ENCODE measurements at regions of chr14 and their contacts with region 1.

Region 1: GRCh38 chr14:52325126-52325525 is 11.0 kb downstream of the PTGER2 start:
- DNase-seq: peak; percentile 84
- H3K4me3 Mint-ChIP-seq: peak overlapping the region; percentile 75
- H3K27ac Mint-ChIP-seq: peak overlapping the region; percentile 77
- H3K4me1 Mint-ChIP-seq: peaks cover 76% of the 10 kb centered on the region
- H3K27me3 Mint-ChIP-seq: no peaks in the 10 kb centered on the region

Region 2: DNA sequence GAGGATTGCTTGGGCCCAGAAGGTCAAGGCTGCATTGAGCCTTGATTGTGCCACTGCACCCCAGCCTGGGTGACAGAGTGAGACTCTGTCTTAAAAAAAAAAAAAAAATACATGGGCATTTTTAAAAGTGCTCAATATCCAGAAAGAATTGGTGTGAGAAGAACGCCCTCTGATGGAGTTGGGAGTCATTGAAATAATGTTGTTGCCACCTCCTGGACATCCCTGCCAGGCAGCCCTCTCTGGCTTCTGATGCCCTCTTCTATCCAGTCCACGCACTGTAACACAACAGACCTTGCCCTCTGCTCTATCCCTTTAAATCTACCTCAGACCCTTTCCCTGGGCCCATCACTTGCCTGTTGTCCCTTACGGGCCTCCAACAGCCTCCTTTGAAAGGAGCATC is 52.8 kb before region 1 on chr14:
- intact Hi-C with region 1: no loop called
- DNase-seq: peak; percentile 75
- H3K4me3 Mint-ChIP-seq: no peak overlapping the region
- H3K27ac Mint-ChIP-seq: no peak overlapping the region
- H3K4me1 Mint-ChIP-seq: peaks cover 20% of the 10 kb centered on the region
- H3K27me3 Mint-ChIP-seq: peaks cover 69% of the 10 kb centered on the region

Region 3: DNA sequence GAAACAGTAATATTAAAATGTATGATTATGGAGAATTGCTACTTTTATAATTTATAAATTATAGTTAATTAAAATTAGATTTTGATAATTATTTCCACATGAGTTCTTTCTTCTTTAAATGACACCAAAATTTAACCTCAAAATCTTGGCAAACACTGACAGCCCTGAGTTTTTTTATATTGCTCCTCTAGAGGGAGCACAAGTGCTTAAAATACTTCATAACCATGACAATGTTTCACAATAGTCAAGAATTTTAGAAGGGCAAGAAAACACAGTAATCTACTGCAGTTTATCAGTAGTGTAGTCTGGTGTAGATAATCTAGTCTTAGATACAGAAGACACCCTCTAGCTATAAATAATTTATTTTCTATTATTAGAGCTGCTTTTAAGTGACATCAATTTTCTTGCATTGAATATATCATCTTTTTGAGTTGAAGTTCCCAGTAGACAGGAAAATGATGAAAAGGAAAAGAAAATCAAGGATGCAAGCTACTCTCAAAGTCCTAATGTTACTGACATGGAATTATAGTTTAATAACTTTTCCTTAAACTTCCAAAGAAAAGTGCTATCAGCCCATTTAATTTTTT is 25.3 kb before region 1 on chr14:
- intact Hi-C with region 1: no loop called
- DNase-seq: peak; percentile 76
- H3K4me3 Mint-ChIP-seq: no peak overlapping the region
- H3K27ac Mint-ChIP-seq: no peak overlapping the region
- H3K4me1 Mint-ChIP-seq: peaks cover 47% of the 10 kb centered on the region
- H3K27me3 Mint-ChIP-seq: peaks cover 2% of the 10 kb centered on the region

Region 4: DNA sequence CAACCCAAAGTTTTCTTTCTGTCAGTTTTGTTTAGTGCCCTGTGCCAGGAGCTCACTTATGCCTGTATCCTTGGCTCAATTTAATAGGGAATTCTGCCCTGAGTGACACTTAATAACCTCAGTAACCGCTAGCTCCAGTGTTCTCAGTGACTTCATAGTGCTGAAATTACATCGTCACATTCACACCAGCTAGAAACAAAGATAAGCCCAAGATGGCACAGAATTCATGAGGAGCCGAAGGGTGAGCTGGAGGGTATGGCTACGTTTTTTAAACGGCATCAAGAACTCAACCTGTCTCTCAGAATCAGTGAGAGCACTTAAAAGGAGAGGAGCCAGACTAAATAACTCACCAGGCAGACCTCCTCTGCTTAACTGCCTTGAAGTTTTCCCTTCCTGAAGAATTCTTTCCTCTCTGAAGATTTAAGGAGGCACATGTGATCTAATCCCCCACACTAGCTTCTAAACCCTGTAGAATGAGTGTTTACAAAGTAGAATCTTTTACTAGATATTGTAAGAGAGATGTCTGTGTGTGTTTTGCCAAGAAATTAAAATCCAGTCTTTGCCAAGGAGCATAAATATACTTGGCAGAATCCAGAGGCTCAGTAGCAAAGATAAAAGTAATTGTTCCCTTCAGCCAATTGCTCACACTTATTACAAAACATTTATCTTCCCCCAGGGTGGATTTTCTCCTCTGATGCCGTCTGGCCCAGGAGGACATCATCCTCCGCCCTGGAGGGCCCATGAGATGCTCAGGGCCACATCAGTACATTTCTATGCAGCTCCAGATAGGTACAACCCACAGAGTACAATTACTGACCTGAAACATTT is 26.3 kb after region 1 on chr14:
- intact Hi-C with region 1: loop called (anchors 1 kb)
- DNase-seq: peak; percentile 82
- H3K4me3 Mint-ChIP-seq: peak overlapping the region; percentile 81
- H3K27ac Mint-ChIP-seq: peak overlapping the region; percentile 99
- H3K4me1 Mint-ChIP-seq: peaks cover 64% of the 10 kb centered on the region
- H3K27me3 Mint-ChIP-seq: no peaks in the 10 kb centered on the region

Region 5: DNA sequence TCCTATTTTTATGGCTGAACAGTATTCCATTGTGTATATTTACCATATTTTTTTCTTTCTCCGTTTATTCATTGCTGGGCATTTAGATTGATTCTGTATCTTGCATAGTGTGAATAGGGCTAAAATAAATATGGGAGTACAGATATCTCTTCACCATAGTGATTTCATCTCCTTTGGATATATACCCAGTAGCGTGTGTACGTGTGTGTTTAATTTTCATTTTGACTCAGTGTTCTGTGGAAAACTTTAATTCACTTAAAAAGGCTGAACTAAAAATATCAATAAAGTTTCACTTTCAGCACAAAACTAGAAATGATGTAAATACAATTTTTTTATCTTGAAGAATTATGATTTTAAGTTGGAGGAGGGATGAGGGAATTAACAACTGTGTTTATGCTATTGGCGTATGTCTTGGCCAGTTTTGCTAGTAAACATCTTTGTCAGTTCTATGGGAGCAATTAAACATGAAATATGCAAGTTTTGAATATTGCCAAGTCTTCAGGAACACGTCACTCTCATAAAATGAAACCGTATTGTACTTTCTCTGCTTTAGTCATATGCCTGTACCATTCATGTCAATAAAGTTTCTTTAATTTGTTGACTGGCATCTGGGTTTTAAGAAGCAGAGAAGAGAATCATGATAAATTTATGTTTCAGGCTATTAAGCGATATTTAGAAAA is 88.7 kb after region 1 on chr14:
- intact Hi-C with region 1: loop called (anchors 1 kb)
- DNase-seq: no peak
- H3K4me3 Mint-ChIP-seq: peak overlapping the region; percentile 66
- H3K27ac Mint-ChIP-seq: peak overlapping the region; percentile 90
- H3K4me1 Mint-ChIP-seq: peaks cover 55% of the 10 kb centered on the region
- H3K27me3 Mint-ChIP-seq: no peaks in the 10 kb centered on the region

Region 6: GRCh38 chr14:52467515-52468266 is 142.6 kb after region 1 on chr14:
- intact Hi-C with region 1: loop called (anchors 1 kb)
- DNase-seq: peak; percentile 75
- H3K4me3 Mint-ChIP-seq: peak overlapping the region; percentile 28
- H3K27ac Mint-ChIP-seq: peak overlapping the region; percentile 56
- H3K4me1 Mint-ChIP-seq: peaks cover 30% of the 10 kb centered on the region
- H3K27me3 Mint-ChIP-seq: no peaks in the 10 kb centered on the region

Region 7: GRCh38 chr14:52755607-52756253 is 430.6 kb after region 1 on chr14:
- intact Hi-C with region 1: no loop called
- DNase-seq: no peak
- H3K4me3 Mint-ChIP-seq: no peak overlapping the region
- H3K27ac Mint-ChIP-seq: no peak overlapping the region
- H3K4me1 Mint-ChIP-seq: no peaks in the 10 kb centered on the region
- H3K27me3 Mint-ChIP-seq: no peaks in the 10 kb centered on the region

Measured in activated CD4-positive, alpha-beta T cell treated with anti-CD3 and anti-CD28 coated beads, Interleukin-2, amount 10 ng/mL, durations not matched to agents 24 days and 14 days (primary cell).